Right ventricle myocardium superior (tissue), 1 donor: ENCODE measurements at regions of chr6 and their contacts with region 1.

Region 1: GRCh38 chr6:30483677-30484279 is 5.5 kb upstream of the HLA-E start:
- DNase-seq: no peak
- ATAC-seq: peak; percentile 52

Region 2: DNA sequence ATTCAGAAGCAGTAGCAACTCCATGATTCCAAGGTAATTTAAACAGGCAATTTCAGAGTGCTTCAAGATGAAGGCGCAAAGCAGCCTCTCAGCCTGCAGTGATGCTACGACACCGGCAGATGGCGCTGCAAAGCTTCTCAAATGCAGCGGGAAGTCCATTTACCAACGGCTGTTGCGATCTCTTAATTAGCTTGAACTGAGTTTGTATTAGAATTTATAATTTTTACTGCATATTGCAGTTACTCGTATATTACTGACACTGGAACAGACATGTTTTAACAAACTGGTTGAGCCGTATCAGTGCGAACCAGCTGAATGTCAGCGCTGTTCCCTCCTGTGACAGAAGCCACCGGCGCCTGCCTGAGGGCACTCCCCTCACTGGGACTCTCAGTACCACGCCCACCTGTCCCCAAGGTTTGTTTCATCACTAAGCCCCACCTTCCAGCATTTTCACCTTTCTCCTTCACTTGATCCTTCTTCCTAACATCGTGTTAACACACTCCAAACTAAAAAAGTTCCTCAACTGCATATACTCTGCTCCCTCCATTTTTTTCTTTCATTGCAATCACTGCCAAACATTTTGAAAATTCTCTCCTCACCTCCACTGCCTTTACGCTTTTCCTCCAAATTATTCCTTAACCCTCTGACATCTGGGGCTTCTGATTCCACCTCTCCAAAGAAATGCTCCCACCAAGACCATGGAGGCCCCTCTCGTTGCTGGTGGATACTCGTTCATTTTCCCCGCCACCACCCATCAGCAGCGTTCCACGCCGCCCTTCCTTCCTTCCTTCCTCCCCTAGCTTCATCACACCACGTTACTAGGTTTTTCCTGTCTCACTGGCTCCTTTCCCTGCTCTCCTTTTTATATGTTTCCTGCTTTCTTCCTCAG is 58.0 kb after region 1 on chr6:
- intact Hi-C with region 1: loop called (anchors 5 kb)
- DNase-seq: peak; percentile 84
- ATAC-seq: peak; percentile 86

Region 3: GRCh38 chr6:30599625-30600324 is 116.0 kb after region 1 on chr6:
- intact Hi-C with region 1: loop called (anchors 5 kb)
- DNase-seq: no peak
- ATAC-seq: no peak

Region 4: DNA sequence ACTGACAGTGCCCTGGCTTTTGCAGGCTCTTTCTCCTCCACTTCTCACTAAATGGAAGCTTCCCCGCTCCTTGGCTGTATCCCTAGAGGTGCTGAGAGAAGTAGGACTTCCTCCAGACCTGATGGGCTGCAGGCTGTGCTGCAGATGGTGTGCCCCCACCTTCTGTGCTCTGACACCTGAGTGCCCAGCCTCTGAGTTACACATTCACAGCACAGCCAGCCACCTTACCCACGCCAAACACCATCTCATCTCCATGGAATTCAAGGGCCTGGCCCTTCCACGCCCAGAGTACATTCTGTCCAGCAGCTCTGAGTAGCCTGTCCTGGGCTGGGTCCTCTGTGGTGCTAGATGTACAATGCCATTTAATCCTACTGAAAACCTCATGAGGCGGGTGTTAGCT is 442.9 kb after region 1 on chr6:
- intact Hi-C with region 1: no loop called
- DNase-seq: peak; percentile 59
- ATAC-seq: peak; percentile 80